CD4-positive, alpha-beta T cell (primary cell): ENCODE measurements at regions of chr15 and their contacts with region 1.

Region 1: DNA sequence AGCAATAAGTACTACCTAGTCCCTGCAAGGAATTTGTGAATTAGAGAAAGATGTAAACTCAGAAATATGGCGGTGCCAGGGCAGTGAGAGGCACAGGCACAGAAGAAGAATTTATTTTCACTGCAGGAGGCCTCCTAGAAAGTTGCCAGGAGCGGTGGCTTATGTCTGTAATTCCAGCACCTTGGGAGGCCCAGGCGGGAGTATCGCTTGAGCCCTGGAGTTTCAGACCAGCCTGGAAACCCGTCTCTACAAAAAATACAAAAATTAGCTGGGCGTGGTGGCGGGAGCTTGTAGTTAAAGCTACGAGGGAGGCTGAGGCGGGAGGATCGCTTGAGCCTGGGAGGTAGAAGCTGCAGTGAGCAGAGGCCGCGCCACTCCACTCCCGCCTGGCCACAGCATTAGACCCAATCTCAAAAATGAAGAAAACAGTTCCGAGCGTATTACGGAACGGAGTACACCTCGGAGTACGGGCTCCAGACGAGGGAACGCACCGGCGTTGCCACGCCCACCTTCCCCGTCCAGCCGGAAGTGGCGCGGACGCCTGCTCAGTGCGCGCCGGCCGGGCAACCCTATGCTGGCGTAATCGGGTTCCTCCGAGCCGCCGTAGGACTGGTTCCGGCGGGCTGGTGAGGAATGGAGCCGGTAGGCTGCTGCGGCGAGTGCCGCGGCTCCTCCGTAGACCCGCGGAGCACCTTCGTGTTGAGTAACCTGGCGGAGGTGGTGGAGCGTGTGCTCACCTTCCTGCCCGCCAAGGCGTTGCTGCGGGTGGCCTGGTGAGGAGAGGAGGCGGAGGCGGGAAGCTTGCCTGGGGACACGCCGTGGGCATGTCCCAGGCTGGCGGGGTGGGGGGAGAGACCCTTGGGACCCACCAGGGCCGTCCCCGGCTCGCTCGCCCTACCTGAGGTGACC is at the start of gene FBXO22:
- DNase-seq: peak; percentile 80 to 94 (median 86)
- ATAC-seq: peak; percentile 87
- H3K4me3 ChIP-seq: peak within 1 kb of the TSS; percentile 86
- H3K4me3 Mint-ChIP-seq: peak within 1 kb of the TSS; percentile 98
- H3K27ac ChIP-seq: peak within 1 kb of the TSS; percentile 76 to 83
- H3K27ac Mint-ChIP-seq: peak within 1 kb of the TSS; percentile 77
- H3K4me1 ChIP-seq: peaks cover 24% of the 10 kb centered on the region
- H3K4me1 Mint-ChIP-seq: peaks cover 41% of the 10 kb centered on the region
- H3K27me3 ChIP-seq: no peaks in the 10 kb centered on the region
- H3K27me3 Mint-ChIP-seq: no peaks in the 10 kb centered on the region
- CTCF ChIP-seq: no peak
- total RNA-seq, gene FBXO22: 5.4 to 7.4 TPM

Region 2: GRCh38 chr15:75738647-75739331 is 164.8 kb before region 1 on chr15:
- CTCF ChIA-PET with region 1: no interaction called
- POLR2A ChIA-PET with region 1: no interaction called
- intact Hi-C with region 1: loop called in 1 of 2 experiments (anchors 5 kb)
- DNase-seq: peak; percentile 79 to 96 (median 87)
- ATAC-seq: peak; percentile 92
- H3K4me3 ChIP-seq: peak overlapping the region; percentile 78
- H3K4me3 Mint-ChIP-seq: peak overlapping the region; percentile 91
- H3K27ac ChIP-seq: no peak overlapping the region
- H3K27ac Mint-ChIP-seq: peak overlapping the region; percentile 73
- H3K4me1 ChIP-seq: peaks cover 19% of the 10 kb centered on the region
- H3K4me1 Mint-ChIP-seq: peaks cover 11% of the 10 kb centered on the region
- H3K27me3 ChIP-seq: no peaks in the 10 kb centered on the region
- H3K27me3 Mint-ChIP-seq: no peaks in the 10 kb centered on the region
- CTCF ChIP-seq: no peak

Region 3: DNA sequence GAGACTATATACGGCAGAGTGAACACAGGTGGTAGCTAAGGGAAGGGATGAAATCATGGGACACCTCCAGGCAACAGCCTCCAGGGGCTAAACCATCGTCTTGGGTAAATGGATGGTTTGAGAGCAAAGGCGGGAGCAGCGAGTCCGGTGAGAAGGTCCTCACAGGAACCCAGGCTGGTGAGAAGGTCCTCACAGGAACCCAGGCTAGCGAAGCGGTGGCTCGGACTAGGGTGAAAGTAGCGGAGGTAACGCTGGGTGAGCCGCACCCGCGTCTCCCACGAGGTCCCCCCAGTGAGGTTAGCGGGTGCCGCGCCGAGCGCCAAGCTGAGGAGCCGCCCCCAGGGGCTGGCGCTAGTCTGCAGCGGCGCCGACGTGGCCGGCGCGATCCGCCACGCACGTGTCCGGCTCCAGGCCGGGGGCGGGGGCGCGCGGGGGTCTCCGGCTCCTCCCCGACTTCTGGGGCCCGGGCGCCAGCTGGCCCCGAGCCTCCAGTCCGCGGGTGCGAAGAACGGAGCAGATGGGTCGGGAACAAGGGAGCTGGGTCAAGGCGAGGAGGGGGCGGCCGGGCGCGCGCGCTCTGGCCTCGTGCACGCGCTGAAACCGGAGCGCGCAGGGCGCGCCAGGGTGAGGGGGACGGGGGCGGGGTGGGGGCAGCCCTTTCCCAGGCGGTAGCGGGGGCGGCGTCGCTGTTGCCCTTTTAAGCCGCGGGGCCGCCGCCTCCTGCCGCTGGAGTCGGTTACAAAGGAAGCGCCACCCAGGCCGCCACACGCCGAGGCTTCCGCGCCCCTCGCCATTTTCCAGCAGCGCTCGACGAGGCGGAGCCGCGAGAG is 60.6 kb before region 1 on chr15 and contains the start of gene UBE2Q2:
- CTCF ChIA-PET with region 1: no interaction called
- POLR2A ChIA-PET with region 1: interaction called, 26 read pairs
- intact Hi-C with region 1: loop called (anchors 2 kb)
- DNase-seq: peak; percentile 53 to 88 (median 68)
- ATAC-seq: peak; percentile 55
- H3K4me3 ChIP-seq: peak within 1 kb of the TSS; percentile 83
- H3K4me3 Mint-ChIP-seq: peak within 1 kb of the TSS; percentile 93
- H3K27ac ChIP-seq: peak within 1 kb of the TSS; percentile 57 to 60
- H3K27ac Mint-ChIP-seq: peak within 1 kb of the TSS; percentile 91
- H3K4me1 ChIP-seq: peaks cover 30% of the 10 kb centered on the region
- H3K4me1 Mint-ChIP-seq: peaks cover 44% of the 10 kb centered on the region
- H3K27me3 ChIP-seq: no peaks in the 10 kb centered on the region
- H3K27me3 Mint-ChIP-seq: no peaks in the 10 kb centered on the region
- CTCF ChIP-seq: no peak
- total RNA-seq, gene UBE2Q2: 29.3 to 33.5 TPM

Region 4: GRCh38 chr15:75861750-75862402 is 41.7 kb before region 1 on chr15:
- CTCF ChIA-PET with region 1: no interaction called
- POLR2A ChIA-PET with region 1: no interaction called
- intact Hi-C with region 1: loop called in 1 of 2 experiments (anchors 5 kb)
- DNase-seq: no peak
- ATAC-seq: no peak
- H3K4me3 ChIP-seq: no peak overlapping the region
- H3K4me3 Mint-ChIP-seq: no peak overlapping the region
- H3K27ac ChIP-seq: no peak overlapping the region
- H3K27ac Mint-ChIP-seq: no peak overlapping the region
- H3K4me1 ChIP-seq: no peaks in the 10 kb centered on the region
- H3K4me1 Mint-ChIP-seq: peaks cover 72% of the 10 kb centered on the region
- H3K27me3 ChIP-seq: no peaks in the 10 kb centered on the region
- H3K27me3 Mint-ChIP-seq: no peaks in the 10 kb centered on the region
- CTCF ChIP-seq: no peak